Head of caudate nucleus (tissue), 42 donors: ENCODE measurements at regions of chr19 and their contacts with region 1.

Region 1: DNA sequence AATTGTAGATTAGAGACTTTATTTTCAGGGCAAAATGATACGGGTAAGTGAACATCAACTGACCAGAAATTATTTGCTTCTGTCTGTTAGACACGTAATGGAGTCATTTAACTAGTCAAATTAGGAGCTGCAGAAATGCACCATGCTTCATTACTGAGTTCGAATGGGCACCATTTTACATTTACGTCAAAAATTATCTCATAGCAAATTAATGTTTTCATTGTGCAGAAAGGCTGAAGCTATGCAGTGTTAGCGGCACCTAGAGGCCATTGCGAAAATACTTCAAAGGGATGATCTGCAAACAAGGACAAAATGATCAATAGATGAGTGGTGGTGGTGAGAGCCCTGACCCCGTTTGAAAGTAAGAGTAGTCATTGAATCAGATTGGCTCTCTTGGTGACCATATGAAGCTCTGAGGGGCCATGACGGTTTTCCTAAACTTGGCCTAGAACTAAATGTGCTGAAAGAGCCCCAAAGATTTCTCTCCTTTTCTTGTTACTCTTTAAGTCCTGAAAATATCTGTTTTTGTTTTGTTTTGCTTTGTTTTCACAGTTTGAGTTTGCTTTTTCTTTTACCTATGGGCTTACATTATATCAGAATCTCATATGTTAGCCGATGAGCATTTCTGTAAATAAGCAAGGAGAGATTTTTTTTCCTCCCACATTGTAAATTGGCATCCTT is 277.9 kb downstream of the ZNF536 start:
- DNase-seq: peak in 36 of 42 donors; percentile 48 to 90 (median 69)

Region 2: DNA sequence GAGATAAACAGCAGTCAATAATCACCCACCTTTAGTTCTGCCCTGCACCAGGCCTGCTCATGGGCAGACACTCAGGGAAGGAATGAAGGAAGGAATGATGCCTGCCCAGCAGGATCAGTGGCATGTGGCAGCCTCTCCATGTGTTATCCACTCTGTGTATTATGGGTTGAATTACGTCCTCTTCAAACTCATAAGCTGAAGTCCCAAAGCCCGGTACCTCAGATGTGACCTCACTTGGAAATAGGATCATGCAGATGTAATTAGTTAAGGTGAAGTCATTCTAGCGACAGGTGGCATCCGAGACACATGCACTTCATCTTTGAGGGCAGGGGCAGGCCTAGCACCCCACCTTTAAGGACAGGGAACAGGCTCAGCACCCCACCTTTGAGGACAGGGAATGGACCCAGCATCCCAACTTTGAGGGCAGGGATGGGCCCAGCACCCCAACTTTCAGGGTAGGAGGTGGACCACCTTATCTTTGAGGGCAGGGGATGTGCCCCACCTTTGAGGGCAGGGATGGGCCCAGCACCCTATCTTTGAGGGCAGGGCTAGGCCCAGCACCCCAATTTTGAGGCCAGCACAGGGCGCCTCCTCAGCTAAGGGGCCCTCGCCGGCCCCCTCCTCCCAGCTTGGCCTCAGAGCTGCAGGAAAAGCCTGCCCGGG is 580.4 kb before region 1 on chr19:
- intact Hi-C with region 1: loop called (anchors 10 kb)
- DNase-seq: peak in 14 of 42 donors; percentile 0 to 25 (median 6)

Region 3: GRCh38 chr19:30222428-30222873 is 427.6 kb before region 1 on chr19:
- intact Hi-C with region 1: loop called (anchors 5 kb)
- DNase-seq: peak in 22 of 42 donors; percentile 32 to 78 (median 56)

Region 4: DNA sequence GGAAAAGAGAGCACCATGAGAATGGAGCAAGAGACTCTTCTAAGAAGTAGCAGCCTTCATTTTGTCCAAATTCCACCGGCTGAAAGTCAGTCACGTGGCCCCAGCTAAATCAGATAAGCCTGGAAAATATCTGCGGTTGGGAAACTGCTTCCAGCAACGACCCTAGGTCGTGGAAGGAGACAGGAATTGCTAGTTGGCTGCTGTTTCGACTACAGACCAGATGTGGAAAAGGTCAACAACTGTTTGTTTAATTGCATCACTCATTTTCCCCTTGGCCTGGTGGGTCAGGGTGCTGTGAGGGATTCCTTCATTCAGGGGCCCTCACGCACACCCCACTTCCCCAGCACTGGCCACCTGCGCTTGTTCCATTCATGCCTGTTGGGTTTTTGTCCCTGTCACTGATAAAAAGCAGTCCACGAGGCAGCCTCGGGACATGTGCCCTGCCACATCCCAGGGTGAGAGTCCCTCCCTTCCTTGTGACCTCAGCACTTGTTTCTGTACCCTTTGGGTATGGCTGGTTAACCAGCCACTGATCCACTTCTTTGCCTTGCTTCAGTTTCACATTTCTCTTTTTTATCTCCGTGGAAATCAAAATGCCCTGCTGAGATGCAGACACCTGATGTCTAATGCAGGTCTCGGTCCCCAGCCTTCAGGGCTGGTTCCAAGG is 170.6 kb before region 1 on chr19:
- intact Hi-C with region 1: no loop called
- DNase-seq: no peak